Right ventricle myocardium inferior (tissue), 1 donor: ENCODE measurements at regions of chr21 and their contacts with region 1.

Region 1: DNA sequence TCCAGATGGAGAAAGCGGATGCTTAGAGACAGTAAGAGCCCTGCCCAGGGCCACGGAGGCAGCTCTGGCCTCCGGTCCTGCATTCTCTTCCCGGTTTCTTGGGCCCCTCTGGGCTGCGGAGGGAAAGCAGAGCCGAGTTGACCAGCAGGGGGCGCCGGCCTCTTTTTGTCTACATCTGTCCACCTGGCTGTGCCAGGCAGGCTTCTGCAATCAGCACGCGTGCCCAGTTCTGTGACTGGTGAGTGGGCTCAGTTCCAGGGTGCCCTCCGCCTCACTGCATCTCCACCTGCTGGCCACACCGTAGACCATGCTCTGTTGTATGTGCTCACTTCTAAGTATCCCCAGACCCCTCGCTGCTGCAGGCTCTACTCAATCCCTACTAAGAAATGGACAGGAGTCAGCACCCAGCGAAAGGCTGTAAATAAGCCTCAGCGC is 6.7 kb upstream of the HUNK start:
- DNase-seq: peak; percentile 89
- ATAC-seq: peak; percentile 87

Region 2: DNA sequence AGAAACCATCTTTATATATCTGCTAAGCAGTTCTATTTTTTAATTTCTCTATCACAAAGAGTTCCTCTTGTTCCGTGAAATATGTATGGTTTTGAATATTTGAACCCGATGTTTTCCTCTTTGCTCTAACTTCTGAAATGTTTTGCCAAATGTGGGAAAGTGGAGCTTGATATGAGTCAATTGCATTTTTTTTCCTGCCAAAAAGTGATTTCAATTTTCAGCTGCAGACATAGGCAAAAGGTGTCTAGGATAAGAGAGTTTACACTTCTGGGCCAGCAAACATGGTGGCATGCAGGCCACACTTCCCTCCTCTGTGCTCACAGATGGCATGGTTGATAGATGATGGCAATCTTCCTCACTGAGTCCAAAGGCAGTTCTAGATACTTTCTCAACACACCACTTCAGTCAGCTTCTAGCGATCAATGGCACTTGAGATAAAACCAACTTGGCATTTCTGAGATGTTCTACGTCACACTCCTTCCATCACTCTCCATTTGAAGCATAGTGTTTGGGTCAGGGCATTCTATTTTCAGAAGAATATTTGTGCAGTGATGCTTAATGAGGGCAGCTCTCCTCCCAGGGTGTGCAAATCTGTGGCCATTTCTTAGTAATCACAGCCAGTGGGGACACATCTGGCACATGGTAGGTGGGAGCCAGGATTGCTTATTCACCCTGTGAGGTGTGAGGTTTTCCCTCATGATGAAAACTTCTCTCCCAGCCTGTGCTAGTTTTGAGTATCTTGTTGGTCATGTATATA is 79.8 kb before region 1 on chr21:
- intact Hi-C with region 1: loop called (anchors 5 kb)
- DNase-seq: no peak
- ATAC-seq: no peak

Region 3: GRCh38 chr21:33299181-33299752 is 1433.2 kb after region 1 on chr21:
- intact Hi-C with region 1: no loop called
- DNase-seq: no peak
- ATAC-seq: no peak